Activated CD4-positive, alpha-beta memory T cell treated with anti-CD3 and anti-CD28 coated beads for 36 hours (primary cell): ENCODE measurements at regions of chr19 and their contacts with region 1.

Region 1: GRCh38 chr19:23758187-23759074 is at the start of gene ZNF681:
- DNase-seq: peak; percentile 94
- H3K4me3 Mint-ChIP-seq: peak within 1 kb of the TSS; percentile 95
- H3K27ac Mint-ChIP-seq: peak within 1 kb of the TSS; percentile 93
- H3K4me1 Mint-ChIP-seq: peaks cover 14% of the 10 kb centered on the region
- H3K27me3 Mint-ChIP-seq: no peaks in the 10 kb centered on the region
- total RNA-seq, gene ZNF681: 3.9 TPM

Region 2: DNA sequence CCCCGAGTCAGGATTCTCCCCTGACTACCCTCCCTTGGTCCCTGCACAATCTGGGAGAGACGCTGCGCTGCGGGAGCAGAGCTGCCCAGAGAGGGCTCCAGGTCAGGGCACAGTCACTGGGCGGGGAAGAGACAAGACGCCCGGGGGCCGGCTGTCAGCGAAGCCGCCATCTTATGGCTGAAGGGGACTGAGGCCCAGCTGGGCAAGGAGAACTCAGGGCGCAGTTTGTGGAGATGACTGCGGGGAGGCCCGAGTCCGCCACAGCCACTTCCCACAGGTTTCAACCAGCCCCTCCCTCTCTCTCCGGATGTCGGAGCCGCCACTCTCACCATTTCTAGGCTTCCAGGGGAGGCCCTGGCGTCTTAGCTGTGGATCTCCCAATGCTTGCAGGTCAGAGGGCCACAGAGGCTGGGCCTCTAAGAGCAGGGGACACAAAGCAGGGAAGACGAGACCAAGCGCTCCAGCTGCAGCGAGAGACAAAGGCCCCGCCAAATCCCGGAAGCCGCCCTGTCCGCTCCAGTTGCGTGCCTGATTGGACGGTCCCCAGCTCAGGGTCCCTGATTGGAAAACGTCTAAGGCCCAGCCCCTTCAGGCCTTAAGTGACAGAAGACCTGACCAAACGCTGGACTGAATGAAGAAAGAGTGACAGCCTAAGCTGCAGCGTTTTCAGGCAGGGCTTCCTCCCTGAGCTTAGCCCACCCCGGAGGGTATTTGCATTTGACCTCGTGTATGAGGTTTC is 508.4 kb before region 1 on chr19 and contains the start of gene ZNF724:
- CTCF ChIA-PET with region 1: no interaction called
- POLR2A ChIA-PET with region 1: no interaction called
- intact Hi-C with region 1: loop called (anchors 5 kb)
- DNase-seq: peak; percentile 94
- H3K4me3 Mint-ChIP-seq: peak within 1 kb of the TSS; percentile 94
- H3K27ac Mint-ChIP-seq: peak within 1 kb of the TSS; percentile 92
- H3K4me1 Mint-ChIP-seq: peaks cover 9% of the 10 kb centered on the region
- H3K27me3 Mint-ChIP-seq: no peaks in the 10 kb centered on the region
- total RNA-seq, gene ZNF724: 13.6 to 14.5 TPM

Region 3: GRCh38 chr19:23395041-23395721 is 363.2 kb before region 1 on chr19 and contains the start of gene ZNF91:
- CTCF ChIA-PET with region 1: no interaction called
- POLR2A ChIA-PET with region 1: interaction called, 5 read pairs
- intact Hi-C with region 1: loop called (anchors 2 kb)
- DNase-seq: peak; percentile 95
- H3K4me3 Mint-ChIP-seq: peak within 1 kb of the TSS; percentile 96
- H3K27ac Mint-ChIP-seq: peak within 1 kb of the TSS; percentile 97
- H3K4me1 Mint-ChIP-seq: peaks cover 30% of the 10 kb centered on the region
- H3K27me3 Mint-ChIP-seq: no peaks in the 10 kb centered on the region
- total RNA-seq, gene ZNF91: 34.7 to 39.0 TPM

Region 4: DNA sequence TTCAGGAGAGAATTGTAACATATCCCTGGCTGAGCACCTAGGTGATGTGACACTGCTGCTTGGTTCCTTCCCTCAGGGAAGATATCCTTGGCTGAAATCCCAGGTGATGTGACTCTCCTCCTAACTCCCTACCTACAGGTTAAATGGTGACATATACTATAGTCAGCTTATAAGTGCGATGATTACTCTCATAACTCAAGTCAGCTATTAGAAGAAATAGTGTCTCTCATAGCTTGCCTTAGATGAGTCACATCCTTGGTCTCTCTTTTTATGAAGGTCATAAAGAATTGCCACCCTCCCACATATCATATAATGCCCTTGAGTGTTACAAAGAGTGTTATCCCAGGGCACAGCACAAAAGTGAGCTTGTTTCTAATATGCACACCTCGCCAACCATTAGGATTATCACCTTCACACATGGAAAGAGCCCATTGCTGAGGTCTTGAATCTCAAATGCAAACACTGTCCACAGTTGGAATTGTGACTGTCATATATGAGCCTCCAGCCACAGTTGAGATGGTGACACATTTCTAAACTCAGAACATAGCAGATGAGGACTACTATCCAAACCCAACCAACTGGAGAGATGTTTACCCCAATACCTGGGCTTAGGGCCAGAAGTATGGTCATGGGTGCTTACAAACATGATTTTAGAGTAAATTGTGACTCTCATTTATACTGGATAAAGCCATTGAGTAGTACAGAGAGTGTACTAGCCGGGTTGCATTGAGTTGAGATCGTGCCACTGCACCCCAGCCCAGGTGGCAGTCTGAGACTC is 14.0 kb after region 1 on chr19:
- CTCF ChIA-PET with region 1: no interaction called
- POLR2A ChIA-PET with region 1: no interaction called
- intact Hi-C with region 1: loop called (anchors 1 kb)
- DNase-seq: no peak
- H3K4me3 Mint-ChIP-seq: no peak overlapping the region
- H3K27ac Mint-ChIP-seq: peak overlapping the region; percentile 34
- H3K4me1 Mint-ChIP-seq: peaks cover 37% of the 10 kb centered on the region
- H3K27me3 Mint-ChIP-seq: no peaks in the 10 kb centered on the region

Region 5: DNA sequence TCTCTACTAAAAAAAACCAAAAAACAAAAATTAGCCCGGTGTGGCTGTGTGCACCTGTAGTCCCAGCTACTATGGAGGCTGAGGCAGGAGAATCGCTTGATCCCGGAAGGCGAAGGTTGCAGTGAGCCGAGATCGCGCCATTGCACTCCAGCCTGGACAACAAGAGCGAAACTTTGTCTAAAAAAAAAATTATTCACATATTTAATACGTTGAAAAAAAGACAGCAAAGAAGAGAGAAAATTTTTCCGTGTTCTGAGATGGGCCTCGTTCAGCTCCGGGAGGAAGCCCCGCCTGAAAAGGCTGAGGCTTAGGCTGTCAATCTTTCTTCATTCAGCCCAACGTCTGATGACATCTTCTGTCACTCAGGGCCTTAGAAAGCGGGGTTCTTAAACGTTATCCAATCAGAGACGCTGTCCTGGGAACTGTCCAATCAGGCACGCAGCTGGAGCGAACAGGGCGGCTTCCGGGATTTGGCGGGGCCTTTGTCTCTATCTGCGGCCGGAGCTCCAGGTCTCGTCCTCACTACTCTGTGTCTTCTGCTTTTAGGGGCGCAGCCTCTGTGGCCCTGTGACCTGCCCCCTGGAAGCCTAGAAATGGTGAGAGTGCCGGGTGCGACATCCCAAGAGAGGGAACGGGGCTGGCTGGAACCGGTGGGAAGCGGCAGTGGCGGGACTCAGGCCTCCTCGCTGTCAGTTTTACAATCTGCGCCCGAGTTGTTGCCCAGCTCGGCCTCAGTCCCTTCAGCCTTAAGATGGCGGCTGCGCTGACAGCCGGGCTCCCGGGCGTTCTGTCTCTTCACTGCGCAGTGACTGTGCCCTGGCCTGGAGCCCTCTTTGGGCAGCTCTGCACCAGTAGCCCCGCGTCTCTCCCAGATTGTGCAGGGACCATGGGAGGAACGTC is 156.2 kb after region 1 on chr19 and contains the start of gene ZNF726:
- CTCF ChIA-PET with region 1: interaction called, 3 read pairs
- POLR2A ChIA-PET with region 1: interaction called, 6 read pairs
- intact Hi-C with region 1: loop called (anchors 2 kb)
- DNase-seq: peak; percentile 93
- H3K4me3 Mint-ChIP-seq: peak within 1 kb of the TSS; percentile 95
- H3K27ac Mint-ChIP-seq: peak within 1 kb of the TSS; percentile 91
- H3K4me1 Mint-ChIP-seq: peaks cover 18% of the 10 kb centered on the region
- H3K27me3 Mint-ChIP-seq: no peaks in the 10 kb centered on the region
- total RNA-seq, gene ZNF726: 15.9 to 17.3 TPM